OCI-LY7 (cell line): ENCODE measurements at regions of chr17 and their contacts with region 1.

Region 1: DNA sequence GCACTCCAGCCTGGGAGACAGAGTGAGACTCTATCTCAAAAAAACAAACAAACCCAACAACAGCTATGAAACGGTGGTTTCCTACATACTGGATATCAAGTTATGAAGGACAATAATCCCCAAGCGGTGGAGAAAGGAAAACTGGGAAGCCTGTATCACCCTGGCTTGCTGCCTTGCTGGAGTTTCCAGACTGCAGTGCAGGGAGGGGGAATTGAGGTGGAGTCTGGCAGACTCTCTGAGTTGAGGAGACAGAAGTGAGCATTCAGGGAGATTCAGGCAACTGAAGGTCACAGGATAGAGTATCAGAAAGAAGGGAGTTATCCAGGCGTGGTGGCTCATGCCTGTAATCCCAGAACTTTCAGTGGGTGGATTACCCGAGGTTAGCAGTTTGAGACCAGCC is 11.9 kb downstream of the QRICH2 start:
- DNase-seq: no peak
- H3K4me3 ChIP-seq: no peak overlapping the region
- H3K27ac ChIP-seq: no peak overlapping the region
- H3K4me1 ChIP-seq: no peaks in the 10 kb centered on the region
- CTCF ChIP-seq: no peak

Region 2: DNA sequence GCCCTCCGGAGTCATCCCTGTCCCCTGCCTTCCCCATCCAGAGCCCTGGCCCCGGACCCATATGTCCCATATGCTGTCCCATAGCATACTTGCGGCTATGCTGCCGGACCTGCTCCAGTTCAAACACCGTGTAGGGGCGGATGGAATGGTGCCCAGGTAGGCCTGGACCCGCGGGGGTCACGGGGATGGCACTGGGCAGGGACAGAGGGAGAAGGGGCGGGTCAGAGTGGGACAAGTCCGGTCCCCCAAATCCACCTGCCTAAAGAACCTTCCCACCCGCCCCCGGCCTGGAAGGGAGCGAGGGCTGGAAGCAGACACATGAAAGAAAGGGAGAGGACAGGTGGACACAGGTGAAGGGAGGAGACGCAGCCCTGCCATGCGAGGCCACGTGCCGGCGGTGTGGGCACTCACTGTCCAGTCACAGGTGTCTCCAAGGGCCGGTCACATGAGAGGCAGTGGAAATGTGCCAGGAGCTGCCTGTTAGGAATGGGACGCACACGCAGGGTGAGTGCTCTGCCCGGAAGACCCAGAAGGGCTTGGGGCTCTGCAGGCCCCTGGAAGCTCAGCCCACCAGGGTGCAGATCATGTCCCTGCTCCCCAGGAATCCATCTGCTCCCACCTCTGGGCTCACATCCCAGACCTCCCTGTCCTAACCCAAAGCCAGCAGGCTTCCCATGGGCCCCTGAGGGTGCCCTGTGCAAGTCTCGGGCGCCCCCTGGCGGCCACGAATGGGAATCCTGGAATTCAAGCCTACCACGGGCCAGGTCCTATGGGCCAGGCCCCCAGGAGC is 17.0 kb before region 1 on chr17:
- CTCF ChIA-PET with region 1: interaction called, 3 read pairs
- POLR2A ChIA-PET with region 1: no interaction called
- intact Hi-C with region 1: loop called (anchors 1 kb)
- DNase-seq: peak; percentile 88
- H3K4me3 ChIP-seq: no peak overlapping the region
- H3K27ac ChIP-seq: no peak overlapping the region
- H3K4me1 ChIP-seq: peaks cover 12% of the 10 kb centered on the region
- CTCF ChIP-seq: peak; percentile 100